WTC11 (cell line): ENCODE measurements at regions of chr22 and their contacts with region 1.

Region 1: GRCh38 chr22:24423519-24424000 is 3.8 kb upstream of the ADORA2A start:
- DNase-seq: peak; percentile 69
- ATAC-seq: peak; percentile 29
- H3K4me3 Mint-ChIP-seq: peak overlapping the region; percentile 61
- H3K27ac Mint-ChIP-seq: no peak overlapping the region
- H3K4me1 Mint-ChIP-seq: peaks cover 27% of the 10 kb centered on the region
- H3K27me3 Mint-ChIP-seq: peaks cover 20% of the 10 kb centered on the region
- CTCF ChIP-seq: peak; percentile 98

Region 2: GRCh38 chr22:24410110-24410856 is 13.3 kb before region 1 on chr22:
- CTCF ChIA-PET with region 1: interaction called, 21 read pairs
- POLR2A ChIA-PET with region 1: no interaction called
- DNase-seq: no peak
- ATAC-seq: no peak
- H3K4me3 Mint-ChIP-seq: no peak overlapping the region
- H3K27ac Mint-ChIP-seq: peak overlapping the region; percentile 77; the same call in 1 of the 2 replicates
- H3K4me1 Mint-ChIP-seq: peaks cover 25% of the 10 kb centered on the region
- H3K27me3 Mint-ChIP-seq: no peaks in the 10 kb centered on the region
- CTCF ChIP-seq: no peak

Region 3: GRCh38 chr22:24445481-24446259 is 22.1 kb after region 1 on chr22:
- CTCF ChIA-PET with region 1: interaction called, 13 read pairs
- POLR2A ChIA-PET with region 1: interaction called, 4 read pairs
- DNase-seq: no peak
- ATAC-seq: peak; percentile 25; the same call in 1 of the 2 replicates
- H3K4me3 Mint-ChIP-seq: no peak overlapping the region
- H3K27ac Mint-ChIP-seq: no peak overlapping the region
- H3K4me1 Mint-ChIP-seq: peaks cover 12% of the 10 kb centered on the region
- H3K27me3 Mint-ChIP-seq: no peaks in the 10 kb centered on the region
- CTCF ChIP-seq: no peak

Region 4: DNA sequence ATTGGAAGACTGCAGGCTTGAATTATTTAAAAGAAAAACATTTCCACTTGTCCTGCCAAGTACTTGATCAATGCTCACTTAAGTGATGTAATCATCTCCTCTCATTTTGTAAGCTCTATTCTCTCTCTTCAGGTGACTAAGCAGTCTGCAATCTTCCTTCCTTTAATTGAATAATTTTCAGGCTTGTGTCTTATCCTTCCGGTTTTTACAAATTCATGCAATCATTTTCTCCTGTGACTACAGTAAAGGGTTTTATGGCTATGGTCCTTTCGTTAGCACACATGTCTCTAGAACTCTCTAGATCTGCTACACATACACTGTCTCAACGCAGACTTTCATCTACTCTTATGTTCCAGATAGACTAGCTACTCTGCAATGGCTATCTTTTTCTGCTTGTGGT is 59.0 kb after region 1 on chr22:
- CTCF ChIA-PET with region 1: interaction called, 20 read pairs
- POLR2A ChIA-PET with region 1: no interaction called
- DNase-seq: no peak
- ATAC-seq: no peak
- H3K4me3 Mint-ChIP-seq: no peak overlapping the region
- H3K27ac Mint-ChIP-seq: no peak overlapping the region; the same call in 1 of the 2 replicates
- H3K4me1 Mint-ChIP-seq: peaks cover 5% of the 10 kb centered on the region
- H3K27me3 Mint-ChIP-seq: no peaks in the 10 kb centered on the region
- CTCF ChIP-seq: no peak

Region 5: GRCh38 chr22:24503137-24503842 is 79.7 kb after region 1 on chr22:
- CTCF ChIA-PET with region 1: interaction called, 271 read pairs
- POLR2A ChIA-PET with region 1: no interaction called
- DNase-seq: peak; percentile 78
- ATAC-seq: peak; percentile 65
- H3K4me3 Mint-ChIP-seq: no peak overlapping the region
- H3K27ac Mint-ChIP-seq: no peak overlapping the region
- H3K4me1 Mint-ChIP-seq: peaks cover 26% of the 10 kb centered on the region
- H3K27me3 Mint-ChIP-seq: no peaks in the 10 kb centered on the region; the same call in none of the 2 replicates
- CTCF ChIP-seq: peak; percentile 48; the same call in 1 of the 2 replicates

Region 6: DNA sequence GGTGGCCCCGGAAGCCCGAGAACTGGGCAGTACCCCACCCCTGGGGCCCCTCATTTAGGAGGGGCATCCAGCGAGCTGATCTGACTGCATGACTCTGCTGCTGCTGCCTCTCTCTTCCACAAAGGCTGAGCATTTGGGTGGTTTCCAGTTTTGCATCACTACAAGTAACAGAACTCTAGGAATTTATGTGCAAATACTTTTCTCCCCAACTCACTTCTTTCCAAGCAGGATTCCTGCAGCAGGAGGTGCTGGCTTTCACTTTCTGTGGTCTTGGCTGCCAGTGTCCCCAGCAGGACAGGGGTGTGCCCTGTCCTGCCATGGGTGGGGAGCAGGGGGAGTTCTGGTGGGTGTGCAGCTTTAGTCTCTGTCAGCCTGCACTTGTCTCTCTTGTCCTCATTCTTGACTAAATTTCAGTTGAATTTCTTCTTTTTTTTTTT is 92.8 kb after region 1 on chr22:
- CTCF ChIA-PET with region 1: interaction called, 243 read pairs
- POLR2A ChIA-PET with region 1: interaction called, 5 read pairs
- DNase-seq: no peak
- ATAC-seq: peak; percentile 67
- H3K4me3 Mint-ChIP-seq: no peak overlapping the region
- H3K27ac Mint-ChIP-seq: no peak overlapping the region
- H3K4me1 Mint-ChIP-seq: peaks cover 13% of the 10 kb centered on the region
- H3K27me3 Mint-ChIP-seq: peaks cover 3% of the 10 kb centered on the region; the same call in 1 of the 2 replicates
- CTCF ChIP-seq: no peak

Region 7: GRCh38 chr22:24576778-24577177 is 153.2 kb after region 1 on chr22:
- CTCF ChIA-PET with region 1: no interaction called
- POLR2A ChIA-PET with region 1: no interaction called
- DNase-seq: no peak
- ATAC-seq: no peak
- H3K4me3 Mint-ChIP-seq: no peak overlapping the region
- H3K27ac Mint-ChIP-seq: peak overlapping the region; percentile 2; the same call in 1 of the 2 replicates
- H3K4me1 Mint-ChIP-seq: no peaks in the 10 kb centered on the region
- H3K27me3 Mint-ChIP-seq: no peaks in the 10 kb centered on the region
- CTCF ChIP-seq: no peak

Region 8: GRCh38 chr22:24588372-24588751 is 164.8 kb after region 1 on chr22:
- CTCF ChIA-PET with region 1: no interaction called
- POLR2A ChIA-PET with region 1: no interaction called
- DNase-seq: no peak
- ATAC-seq: no peak
- H3K4me3 Mint-ChIP-seq: no peak overlapping the region
- H3K27ac Mint-ChIP-seq: no peak overlapping the region
- H3K4me1 Mint-ChIP-seq: peaks cover 7% of the 10 kb centered on the region; the same call in 1 of the 2 replicates
- H3K27me3 Mint-ChIP-seq: no peaks in the 10 kb centered on the region
- CTCF ChIP-seq: no peak